ENCODE measurements at regions of chr15 and their contacts with region 1.

Region 1: GRCh38 chr15:82540055-82540983 is at the start of gene RPS17:
- DNase-seq: peak; percentile 83 to 99
- H3K4me3 ChIP-seq: peak within 1 kb of the TSS; percentile 64 to 76
- H3K27ac ChIP-seq: peak within 1 kb of the TSS; percentile 94 to 96
- H3K4me1 ChIP-seq: peaks cover 0 to 16% of the 10 kb centered on the region in 2 donors
- H3K27me3 ChIP-seq: no peaks in the 10 kb centered on the region
- CTCF ChIP-seq: peak; percentile 97 to 99 (median 98)
- total RNA-seq, gene RPS17: 1,125 TPM

Region 2: DNA sequence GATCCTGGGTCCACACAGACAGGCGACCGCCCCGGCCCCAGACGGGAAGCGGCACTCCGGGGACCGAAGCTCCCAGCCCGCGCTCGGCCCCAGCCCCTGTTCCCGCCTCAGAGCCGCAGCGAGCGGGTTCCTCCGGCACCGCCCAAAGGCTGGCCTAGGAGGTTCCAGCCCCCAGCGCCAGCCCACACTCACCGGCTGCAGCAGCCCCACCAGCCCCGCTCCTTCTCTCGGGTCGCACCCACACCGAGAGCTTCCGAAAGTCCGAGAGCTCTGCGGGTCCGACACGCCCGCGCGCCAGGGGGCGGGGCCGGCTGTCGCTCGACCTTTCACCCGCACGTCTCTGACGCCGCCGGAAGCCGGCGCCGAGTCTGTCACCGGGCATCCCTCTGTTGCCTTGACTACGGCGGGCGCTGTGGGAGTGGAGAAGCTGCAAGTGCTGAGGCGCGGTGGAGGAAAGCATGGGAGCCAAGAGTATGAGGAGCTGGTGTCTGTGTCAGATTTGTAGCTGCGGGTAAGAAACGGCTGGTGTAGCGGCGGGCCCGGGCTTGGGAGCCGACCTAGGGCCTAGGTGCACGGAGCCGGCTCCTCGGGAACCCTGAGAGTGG is 277.8 kb before region 1 on chr15 and contains the starts of genes EFL1 and SAXO2:
- intact Hi-C with region 1: loop called (anchors 10 kb)
- DNase-seq: peak; percentile 77 to 96
- H3K4me3 ChIP-seq: peak within 1 kb of the TSS; percentile 82 to 89
- H3K27ac ChIP-seq: peak within 1 kb of the TSS; percentile 68 to 71
- H3K4me1 ChIP-seq: peaks cover 2 to 18% of the 10 kb centered on the region in 2 donors
- H3K27me3 ChIP-seq: no peaks in the 10 kb centered on the region
- CTCF ChIP-seq: no peak
- total RNA-seq, gene EFL1: 17.3 TPM
- total RNA-seq, gene SAXO2: not detected

Region 3: GRCh38 chr15:82749951-82750830 is 209.9 kb after region 1 on chr15:
- intact Hi-C with region 1: loop called (anchors 1 kb)
- DNase-seq: peak; percentile 73 to 95
- H3K4me3 ChIP-seq: peak overlapping the region; percentile 73 to 90
- H3K27ac ChIP-seq: peak overlapping the region; percentile 85 to 89
- H3K4me1 ChIP-seq: peaks cover 5 to 7% of the 10 kb centered on the region in 2 donors
- H3K27me3 ChIP-seq: no peaks in the 10 kb centered on the region
- CTCF ChIP-seq: no peak

Region 4: GRCh38 chr15:82985688-82986441 is 445.5 kb after region 1 on chr15 and contains the start of gene RAMAC:
- intact Hi-C with region 1: loop called (anchors 5 kb)
- DNase-seq: peak; percentile 83 to 97
- H3K4me3 ChIP-seq: peak within 1 kb of the TSS; percentile 78 to 89
- H3K27ac ChIP-seq: peak within 1 kb of the TSS; percentile 63 to 72
- H3K4me1 ChIP-seq: peaks cover 0 to 14% of the 10 kb centered on the region in 2 donors
- H3K27me3 ChIP-seq: no peaks in the 10 kb centered on the region
- CTCF ChIP-seq: no peak
- total RNA-seq, gene RAMAC: 4.8 TPM

Region 5: GRCh38 chr15:83066734-83067637 is 526.7 kb after region 1 on chr15 and contains the start of gene BTBD1:
- intact Hi-C with region 1: loop called (anchors 1 kb)
- DNase-seq: peak; percentile 92 to 99
- H3K4me3 ChIP-seq: peak within 1 kb of the TSS; percentile 91 to 98
- H3K27ac ChIP-seq: peak within 1 kb of the TSS; percentile 97 to 99
- H3K4me1 ChIP-seq: peaks cover 17 to 25% of the 10 kb centered on the region in 2 donors
- H3K27me3 ChIP-seq: no peaks in the 10 kb centered on the region
- CTCF ChIP-seq: peak in 1 of 3 experiments; percentile 5
- total RNA-seq, gene BTBD1: 63.9 TPM

Measured in ascending aorta (tissue), 2 donors.